ENCODE measurements at regions of chr2 and their contacts with region 1.

Region 1: GRCh38 chr2:176140513-176141317 is 10.6 kb upstream of the HOXD4 start:
- DNase-seq: peak in 8 of 10 donors; percentile 31 to 95 (median 68)

Region 2: DNA sequence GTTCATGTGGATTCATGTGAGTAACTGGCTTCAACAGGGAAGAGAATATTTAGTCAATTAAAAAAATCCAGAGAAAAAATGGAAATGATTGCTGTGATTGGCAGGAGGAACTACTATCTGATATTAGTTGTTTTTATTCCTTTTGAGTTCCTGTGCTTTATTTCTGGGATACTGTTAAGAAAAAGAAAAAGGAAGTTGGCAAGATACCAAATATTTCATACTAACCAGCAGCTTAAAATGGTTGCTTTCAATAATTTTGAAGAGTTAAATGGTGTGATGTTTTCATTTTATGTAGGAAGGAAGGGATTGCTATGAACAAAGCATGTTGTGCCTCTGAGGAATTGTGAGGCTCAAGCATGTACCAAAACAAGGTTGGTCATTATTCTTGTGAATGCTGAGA is 120.4 kb after region 1 on chr2:
- intact Hi-C with region 1: no loop called
- DNase-seq: no peak

Region 3: DNA sequence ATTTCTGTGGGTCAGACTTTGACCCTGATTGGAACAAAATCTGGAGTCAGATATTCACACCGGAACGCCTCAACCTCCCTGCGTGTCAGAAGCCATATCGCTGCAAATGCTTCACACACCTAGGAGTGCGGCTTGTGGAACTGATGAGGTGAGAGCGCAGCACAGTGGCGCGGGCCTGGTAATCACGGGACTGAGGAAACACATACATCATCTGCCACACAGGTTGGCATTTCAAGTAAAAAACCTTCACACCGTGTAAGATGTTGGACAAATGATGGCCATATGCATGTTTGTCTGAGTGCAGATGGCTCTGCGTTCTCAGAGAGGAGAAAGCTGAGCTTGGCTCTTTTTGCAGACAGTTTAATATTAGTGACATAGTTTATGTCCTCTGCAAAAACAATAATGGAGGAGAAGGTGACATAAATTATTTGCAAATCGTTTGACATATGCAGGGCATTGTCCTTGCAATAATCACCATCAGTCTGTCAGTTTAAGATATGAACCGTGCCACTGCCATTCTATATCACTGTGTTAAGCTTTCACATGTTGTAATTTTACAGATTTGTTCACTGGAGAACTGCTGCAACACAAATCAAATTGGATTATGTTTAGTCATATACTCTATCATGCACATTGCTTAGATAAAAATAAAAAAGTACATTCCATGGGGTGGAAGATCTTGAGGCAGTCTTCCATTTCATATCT is 229.9 kb after region 1 on chr2:
- intact Hi-C with region 1: no loop called
- DNase-seq: no peak

Region 4: GRCh38 chr2:176454893-176455811 is 314.4 kb after region 1 on chr2:
- intact Hi-C with region 1: loop called (anchors 1 kb)
- DNase-seq: peak; percentile 64 to 97 (median 90)

Region 5: DNA sequence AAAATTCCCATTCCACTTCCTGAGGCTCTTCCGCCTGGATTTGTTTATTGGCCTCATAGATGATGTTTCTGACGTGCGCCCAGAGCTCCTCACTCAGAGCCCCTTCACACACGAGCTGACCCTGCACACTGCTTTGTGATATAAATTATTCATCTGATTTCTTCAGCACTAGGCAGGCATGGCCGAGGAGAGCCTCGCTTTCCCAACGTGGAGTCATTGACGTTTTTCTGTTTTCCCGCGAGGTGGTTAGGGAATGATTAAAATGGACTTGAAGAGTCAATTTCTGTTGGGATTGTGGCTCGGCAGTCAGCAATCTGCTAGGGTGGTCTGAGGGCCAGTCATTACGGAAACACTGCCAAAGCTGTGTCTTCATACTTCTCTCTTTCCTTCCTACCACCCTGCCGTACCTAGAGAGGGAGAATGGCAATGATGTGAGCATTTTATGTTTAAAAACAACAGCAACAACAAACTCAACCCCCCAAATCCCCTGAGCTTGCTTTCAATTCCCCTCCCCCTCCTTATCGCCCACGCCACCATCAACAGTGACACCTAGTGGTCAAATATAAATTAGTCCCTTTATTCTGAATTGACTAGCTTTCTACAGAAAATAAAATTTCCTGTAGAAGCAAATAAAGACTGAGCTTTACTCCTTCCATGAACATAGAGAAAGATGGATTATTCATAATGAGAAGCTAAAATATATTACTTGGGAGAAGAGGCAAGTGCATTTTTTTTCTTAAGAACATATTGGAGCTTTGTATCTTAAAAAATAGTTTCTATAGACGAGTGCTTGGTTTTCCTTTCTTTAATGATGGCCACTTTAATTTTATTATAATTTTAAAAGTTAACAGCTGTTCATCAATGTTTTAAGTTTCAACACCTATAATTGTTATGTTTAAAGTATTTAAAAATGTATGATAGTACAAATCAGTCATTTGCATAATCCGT is 413.7 kb after region 1 on chr2:
- intact Hi-C with region 1: loop called (anchors 1 kb)
- DNase-seq: peak in 7 of 10 donors; percentile 8 to 74 (median 26)

Region 6: GRCh38 chr2:176638167-176639015 is 497.7 kb after region 1 on chr2:
- intact Hi-C with region 1: loop called (anchors 5 kb)
- DNase-seq: peak; percentile 36 to 94 (median 68)

Region 7: DNA sequence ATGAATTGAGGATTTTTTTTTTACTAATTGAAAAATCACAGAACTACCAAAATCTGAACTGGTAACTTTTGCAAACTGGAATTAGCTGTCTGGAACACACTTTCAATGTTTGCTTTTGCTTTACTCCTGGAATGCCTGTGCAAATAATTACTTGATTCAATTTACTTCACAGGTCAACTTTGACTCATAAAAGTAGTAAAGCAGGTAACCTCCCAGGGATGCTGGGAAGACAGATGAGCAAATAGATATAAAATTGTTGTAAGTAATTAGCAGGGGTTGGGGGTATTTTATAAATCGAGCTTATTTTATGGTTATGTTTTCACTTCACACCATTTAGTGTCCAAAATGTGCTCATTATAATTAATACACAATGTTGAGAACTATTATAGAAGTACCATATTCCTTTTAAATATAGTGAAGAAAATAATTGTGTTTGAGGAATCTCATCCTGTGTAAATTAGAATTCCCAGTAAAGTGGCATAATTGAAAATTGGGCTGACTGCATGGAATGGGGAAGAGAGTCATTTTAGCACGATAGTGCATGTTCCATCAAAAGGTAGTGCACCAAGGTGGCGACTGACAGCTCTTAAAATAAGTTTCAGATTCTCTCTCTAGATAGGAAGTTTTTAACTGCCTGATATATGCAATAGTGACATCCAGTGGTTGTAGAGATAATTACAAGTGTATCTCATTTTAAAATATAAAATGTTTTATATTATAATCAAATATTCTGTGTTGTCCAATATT is 673.8 kb after region 1 on chr2:
- intact Hi-C with region 1: loop called (anchors 5 kb)
- DNase-seq: no peak

Measured in posterior cingulate gyrus (tissue), 11 donors.